HAP-1 (cell line): ENCODE measurements at regions of chr2 and their contacts with region 1.

Region 1: DNA sequence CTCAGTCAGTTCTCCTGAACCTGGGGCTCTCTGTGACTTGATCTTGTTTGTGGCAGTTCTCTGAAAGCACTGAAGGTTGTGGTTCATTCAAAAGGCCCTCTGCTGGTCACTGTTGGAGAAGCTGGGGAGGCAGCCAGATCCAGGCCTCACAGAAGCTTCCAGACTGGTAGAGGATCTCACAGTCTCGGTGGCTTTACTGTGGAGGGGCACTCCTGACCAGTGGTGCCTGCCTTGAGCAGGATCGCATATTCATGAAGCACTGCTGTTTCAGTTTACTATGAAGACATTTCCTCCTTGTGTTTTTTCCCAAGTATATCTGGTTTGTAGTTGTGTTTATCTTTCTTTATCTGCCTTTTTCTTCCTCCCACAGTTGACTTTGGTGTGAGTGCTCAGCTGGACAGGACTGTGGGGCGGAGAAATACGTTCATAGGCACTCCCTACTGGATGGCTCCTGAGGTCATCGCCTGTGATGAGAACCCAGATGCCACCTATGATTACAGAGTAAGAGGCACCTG is 133.9 kb downstream of the MAP4K4 start:
- DNase-seq: peak; percentile 34 to 70
- H3K4me3 ChIP-seq: no peak overlapping the region
- H3K4me1 ChIP-seq: no peaks in the 10 kb centered on the region
- H3K27me3 ChIP-seq: no peaks in the 10 kb centered on the region

Region 2: DNA sequence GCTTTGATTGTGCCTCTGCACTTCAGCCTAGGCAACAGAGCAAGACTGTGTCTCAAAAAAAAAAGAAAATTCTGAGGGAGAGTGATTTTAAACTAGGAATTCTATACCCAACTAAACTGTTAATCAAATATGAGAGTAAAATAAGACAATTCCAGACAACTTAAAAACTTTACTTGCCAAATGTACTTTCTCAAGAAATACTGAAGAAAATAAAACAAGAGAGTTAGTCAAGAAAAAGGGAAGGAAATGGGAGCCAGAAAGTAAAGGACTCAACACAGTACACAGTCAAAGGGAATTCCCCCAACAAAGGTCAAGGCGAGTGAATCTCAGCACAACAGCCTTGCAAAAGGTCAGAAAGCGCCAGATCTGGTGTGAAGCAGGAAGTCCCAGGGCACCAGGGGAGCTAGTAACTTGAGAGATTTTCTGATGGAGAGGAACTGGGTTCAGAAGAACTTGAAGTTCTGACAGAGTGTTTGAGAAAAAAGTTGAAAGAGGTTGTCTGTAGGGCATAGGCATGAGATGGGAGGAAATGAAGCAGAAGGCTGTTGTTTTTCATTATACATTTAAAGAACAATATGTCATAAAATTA is 657.6 kb before region 1 on chr2:
- in situ Hi-C with region 1: no loop called
- DNase-seq: no peak
- H3K4me3 ChIP-seq: no peak overlapping the region
- H3K4me1 ChIP-seq: peaks cover 10% of the 10 kb centered on the region
- H3K27me3 ChIP-seq: no peaks in the 10 kb centered on the region

Region 3: GRCh38 chr2:101419096-101419663 is 412.2 kb before region 1 on chr2:
- in situ Hi-C with region 1: loop called (anchors 10 kb)
- DNase-seq: peak; percentile 41 to 74
- H3K4me3 ChIP-seq: no peak overlapping the region
- H3K4me1 ChIP-seq: no peaks in the 10 kb centered on the region
- H3K27me3 ChIP-seq: peaks cover 2% of the 10 kb centered on the region; the same call in 1 of the 2 replicates